Right lobe of liver (tissue), 6 donors: ENCODE measurements at regions of chr11 and their contacts with region 1.

Region 1: GRCh38 chr11:2305140-2305840 is 3.5 kb downstream of the TSPAN32 start:
- DNase-seq: peak; percentile 89 to 90 (median 89)
- ATAC-seq: peak; percentile 76 to 87 (median 86)
- H3K4me3 ChIP-seq: no peak overlapping the region
- H3K27ac ChIP-seq: peak overlapping the region in 1 of 3 donors; percentile 39
- H3K4me1 ChIP-seq: peaks cover 0 to 9% (median 3%) of the 10 kb centered on the region in 4 donors
- H3K27me3 ChIP-seq: no peaks in the 10 kb centered on the region
- CTCF ChIP-seq: peak; percentile 89 to 96 (median 94)
- POLR2A ChIP-seq: no peak

Region 2: DNA sequence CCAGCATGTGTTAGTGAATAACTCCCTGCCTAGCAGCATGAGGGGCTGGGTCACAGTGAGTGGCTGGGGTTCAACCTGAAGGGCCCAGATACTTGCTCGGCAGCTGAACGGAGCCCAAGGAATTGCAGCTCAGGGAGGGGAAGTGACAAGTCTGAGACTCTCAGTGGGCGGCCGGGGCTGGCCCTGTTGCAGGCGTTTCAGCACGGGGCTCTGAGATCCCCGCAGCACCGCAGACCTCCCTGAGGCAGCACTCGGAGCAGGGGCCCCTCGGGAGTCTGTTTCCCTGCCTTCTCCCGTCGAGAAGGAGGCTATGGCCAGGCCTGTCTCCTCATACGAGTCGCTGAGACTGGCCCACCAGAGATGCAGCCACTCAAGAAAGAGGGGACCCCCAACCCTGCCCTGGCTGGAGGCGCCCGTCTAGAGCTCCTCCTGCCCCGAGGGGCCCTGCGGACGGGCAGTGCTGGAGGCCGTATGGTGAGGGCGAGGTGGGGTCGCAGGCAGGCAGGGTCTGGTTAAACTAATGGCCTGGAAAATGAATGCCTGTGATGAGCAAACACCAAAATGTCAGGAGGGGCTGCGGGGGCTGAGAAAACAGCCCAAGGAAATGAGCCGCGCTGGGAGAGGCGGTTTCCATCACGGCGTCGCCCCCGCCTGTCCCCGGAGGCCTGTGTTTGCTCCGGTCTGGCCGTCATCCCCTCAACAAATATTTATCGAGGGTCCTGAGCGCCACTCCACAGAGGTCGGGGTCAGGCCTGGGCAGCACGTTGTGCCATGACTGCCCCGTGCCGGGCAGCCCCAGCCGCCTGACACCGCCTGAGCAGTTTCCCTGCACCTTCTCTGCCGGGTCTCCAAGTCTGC is 104.5 kb after region 1 on chr11:
- intact Hi-C with region 1: loop called (anchors 5 kb)
- DNase-seq: no peak
- ATAC-seq: no peak
- H3K4me3 ChIP-seq: no peak overlapping the region
- H3K27ac ChIP-seq: no peak overlapping the region
- H3K4me1 ChIP-seq: no peaks in the 10 kb centered on the region
- H3K27me3 ChIP-seq: no peaks in the 10 kb centered on the region
- CTCF ChIP-seq: no peak
- POLR2A ChIP-seq: no peak

Region 3: GRCh38 chr11:2420502-2421225 is 115.4 kb after region 1 on chr11:
- intact Hi-C with region 1: loop called (anchors 2 to 5 kb)
- DNase-seq: peak; percentile 72 to 78 (median 78)
- ATAC-seq: peak; percentile 89 to 95 (median 94)
- H3K4me3 ChIP-seq: no peak overlapping the region
- H3K27ac ChIP-seq: no peak overlapping the region
- H3K4me1 ChIP-seq: no peaks in the 10 kb centered on the region
- H3K27me3 ChIP-seq: no peaks in the 10 kb centered on the region
- CTCF ChIP-seq: peak; percentile 92 to 95 (median 94)
- POLR2A ChIP-seq: no peak